CD4-positive, alpha-beta memory T cell (primary cell): ENCODE measurements at regions of chr11 and their contacts with region 1.

Region 1: DNA sequence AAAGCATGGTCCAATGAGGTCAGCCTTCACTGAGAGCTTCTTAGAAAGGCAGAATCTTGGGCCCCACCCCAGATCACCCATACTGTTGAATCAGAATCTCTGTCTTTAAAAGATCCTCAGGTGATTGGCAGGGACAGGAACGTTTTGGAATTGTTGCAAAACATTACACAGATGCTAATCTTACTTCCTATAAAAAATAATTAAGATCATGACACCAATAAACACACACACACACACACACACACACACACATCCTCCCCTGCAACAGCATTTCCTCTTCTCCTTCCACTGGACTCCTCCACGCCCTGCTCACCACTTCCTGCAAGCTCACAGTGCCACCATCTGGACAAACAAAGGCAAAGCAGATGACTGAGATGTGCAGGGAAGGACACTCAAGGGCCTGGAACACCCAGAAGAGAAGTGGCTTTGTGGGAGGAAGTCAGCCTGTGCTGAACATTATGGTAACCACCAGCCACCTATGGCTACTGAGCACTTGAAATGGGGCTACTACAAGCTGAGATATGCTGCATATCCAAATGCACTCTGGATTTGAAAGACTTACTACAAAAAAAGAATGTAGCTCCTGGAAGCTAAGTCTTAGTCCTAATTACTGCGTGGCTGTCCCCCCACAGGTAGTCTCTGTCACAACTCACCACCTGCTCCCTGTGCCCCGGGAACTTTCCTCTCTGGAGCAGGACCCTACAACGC is 65.6 kb downstream of the BTG4 start:
- DNase-seq: peak; percentile 83 to 90 (median 87)
- H3K4me3 ChIP-seq: no peak overlapping the region
- H3K4me3 Mint-ChIP-seq: peak overlapping the region in 4 of 8 donors; percentile 17 to 75 (median 42)
- H3K27ac ChIP-seq: no peak overlapping the region
- H3K27ac Mint-ChIP-seq: peak overlapping the region; percentile 48 to 95 (median 88)
- H3K4me1 ChIP-seq: peaks cover 18% of the 10 kb centered on the region
- H3K4me1 Mint-ChIP-seq: peaks cover 11 to 20% (median 16%) of the 10 kb centered on the region in 4 donors
- H3K27me3 ChIP-seq: no peaks in the 10 kb centered on the region
- H3K27me3 Mint-ChIP-seq: no peaks in the 10 kb centered on the region

Region 2: GRCh38 chr11:110447897-110448745 is 998.4 kb before region 1 on chr11:
- CTCF ChIA-PET with region 1: interaction called, 3 read pairs
- POLR2A ChIA-PET with region 1: no interaction called
- intact Hi-C with region 1: loop called (anchors 2 kb)
- DNase-seq: peak in 3 of 5 donors; percentile 19 to 24 (median 23)
- H3K4me3 ChIP-seq: no peak overlapping the region
- H3K4me3 Mint-ChIP-seq: no peak overlapping the region
- H3K27ac ChIP-seq: no peak overlapping the region
- H3K27ac Mint-ChIP-seq: no peak overlapping the region
- H3K4me1 ChIP-seq: peaks cover 2% of the 10 kb centered on the region
- H3K4me1 Mint-ChIP-seq: peaks cover 21 to 42% (median 26%) of the 10 kb centered on the region in 4 donors
- H3K27me3 ChIP-seq: no peaks in the 10 kb centered on the region
- H3K27me3 Mint-ChIP-seq: no peaks in the 10 kb centered on the region

Region 3: GRCh38 chr11:111359223-111360149 is 87.1 kb before region 1 on chr11:
- CTCF ChIA-PET with region 1: interaction called, 8 read pairs
- POLR2A ChIA-PET with region 1: no interaction called
- intact Hi-C with region 1: loop called (anchors 5 kb)
- DNase-seq: peak in 1 of 5 donors; percentile 6
- H3K4me3 ChIP-seq: no peak overlapping the region
- H3K4me3 Mint-ChIP-seq: no peak overlapping the region
- H3K27ac ChIP-seq: no peak overlapping the region
- H3K27ac Mint-ChIP-seq: peak overlapping the region in 1 of 7 donors; percentile 16
- H3K4me1 ChIP-seq: no peaks in the 10 kb centered on the region
- H3K4me1 Mint-ChIP-seq: no peaks in the 10 kb centered on the region
- H3K27me3 ChIP-seq: no peaks in the 10 kb centered on the region
- H3K27me3 Mint-ChIP-seq: no peaks in the 10 kb centered on the region

Region 4: GRCh38 chr11:111429066-111429506 is 17.5 kb before region 1 on chr11:
- CTCF ChIA-PET with region 1: interaction called, 24 read pairs
- POLR2A ChIA-PET with region 1: no interaction called
- intact Hi-C with region 1: no loop called
- DNase-seq: peak in 4 of 5 donors; percentile 33 to 41 (median 40)
- H3K4me3 ChIP-seq: no peak overlapping the region
- H3K4me3 Mint-ChIP-seq: no peak overlapping the region
- H3K27ac ChIP-seq: no peak overlapping the region
- H3K27ac Mint-ChIP-seq: no peak overlapping the region
- H3K4me1 ChIP-seq: no peaks in the 10 kb centered on the region
- H3K4me1 Mint-ChIP-seq: no peaks in the 10 kb centered on the region
- H3K27me3 ChIP-seq: no peaks in the 10 kb centered on the region
- H3K27me3 Mint-ChIP-seq: peaks cover 3 to 10% of the 10 kb centered on the region in 2 donors

Region 5: DNA sequence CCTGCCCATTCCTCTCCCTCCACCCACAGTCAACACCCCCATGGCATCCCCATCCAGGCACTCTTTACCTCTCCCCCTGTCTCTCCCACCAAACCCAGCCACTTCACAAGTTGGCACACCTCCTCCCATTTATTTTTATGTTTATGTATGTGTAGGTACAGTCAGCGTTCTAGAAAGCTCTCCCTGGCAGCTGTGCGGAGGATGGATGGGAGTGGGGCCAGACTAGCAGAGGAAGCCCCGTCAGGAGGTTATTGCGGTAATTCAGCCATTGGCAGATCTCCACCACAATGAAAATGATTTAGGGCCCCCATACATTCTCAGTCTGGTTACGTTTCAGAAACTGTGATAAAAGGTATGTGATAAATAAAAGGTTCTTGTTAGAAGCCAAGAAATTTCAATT is 14.3 kb after region 1 on chr11:
- CTCF ChIA-PET with region 1: interaction called, 12 read pairs
- POLR2A ChIA-PET with region 1: no interaction called
- intact Hi-C with region 1: no loop called
- DNase-seq: no peak
- H3K4me3 ChIP-seq: no peak overlapping the region
- H3K4me3 Mint-ChIP-seq: no peak overlapping the region
- H3K27ac ChIP-seq: no peak overlapping the region
- H3K27ac Mint-ChIP-seq: no peak overlapping the region
- H3K4me1 ChIP-seq: no peaks in the 10 kb centered on the region
- H3K4me1 Mint-ChIP-seq: no peaks in the 10 kb centered on the region
- H3K27me3 ChIP-seq: peaks cover 5% of the 10 kb centered on the region
- H3K27me3 Mint-ChIP-seq: peaks cover 11 to 22% of the 10 kb centered on the region in 2 donors

Region 6: DNA sequence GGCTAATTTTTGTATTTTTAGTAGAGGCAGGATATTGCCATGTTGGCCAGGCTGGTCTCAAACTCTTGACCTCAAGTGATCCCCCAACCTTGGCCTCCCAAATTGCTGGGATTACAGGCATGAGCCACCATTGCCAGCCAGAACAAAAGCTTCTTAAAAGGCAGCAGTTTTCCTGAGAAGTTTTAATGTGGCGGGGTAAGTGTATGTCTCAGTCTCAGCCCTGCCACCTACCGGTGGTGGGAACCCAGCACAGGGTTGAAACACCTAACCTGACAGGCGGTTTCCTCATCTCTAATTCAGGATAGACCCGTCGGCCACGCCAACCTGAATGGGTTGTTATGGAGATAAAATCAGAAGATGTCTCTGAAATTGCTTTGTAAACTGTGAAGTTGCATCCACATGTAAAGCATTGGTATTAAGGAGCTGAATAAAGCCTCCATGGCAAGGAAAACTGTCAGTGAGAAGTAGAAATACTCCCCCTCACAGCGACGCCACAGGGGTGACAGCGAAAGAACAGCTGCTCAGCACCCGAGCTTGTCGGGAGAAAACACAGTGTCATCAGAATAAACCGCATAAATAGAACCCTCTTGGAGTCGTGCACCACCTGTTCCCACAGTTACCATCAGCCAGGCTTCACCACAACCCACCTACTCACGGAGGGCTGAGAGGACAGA is 1348.7 kb after region 1 on chr11:
- CTCF ChIA-PET with region 1: no interaction called
- POLR2A ChIA-PET with region 1: no interaction called
- intact Hi-C with region 1: no loop called
- DNase-seq: peak in 2 of 5 donors; percentile 11 to 12
- H3K4me3 ChIP-seq: no peak overlapping the region
- H3K4me3 Mint-ChIP-seq: no peak overlapping the region
- H3K27ac ChIP-seq: no peak overlapping the region
- H3K27ac Mint-ChIP-seq: no peak overlapping the region
- H3K4me1 ChIP-seq: peaks cover 6% of the 10 kb centered on the region
- H3K4me1 Mint-ChIP-seq: peaks cover 3 to 9% (median 5%) of the 10 kb centered on the region in 4 donors
- H3K27me3 ChIP-seq: no peaks in the 10 kb centered on the region
- H3K27me3 Mint-ChIP-seq: peaks cover 1 to 2% of the 10 kb centered on the region in 2 donors